ENCODE measurements at regions of chr5 and their contacts with region 1.

Region 1: DNA sequence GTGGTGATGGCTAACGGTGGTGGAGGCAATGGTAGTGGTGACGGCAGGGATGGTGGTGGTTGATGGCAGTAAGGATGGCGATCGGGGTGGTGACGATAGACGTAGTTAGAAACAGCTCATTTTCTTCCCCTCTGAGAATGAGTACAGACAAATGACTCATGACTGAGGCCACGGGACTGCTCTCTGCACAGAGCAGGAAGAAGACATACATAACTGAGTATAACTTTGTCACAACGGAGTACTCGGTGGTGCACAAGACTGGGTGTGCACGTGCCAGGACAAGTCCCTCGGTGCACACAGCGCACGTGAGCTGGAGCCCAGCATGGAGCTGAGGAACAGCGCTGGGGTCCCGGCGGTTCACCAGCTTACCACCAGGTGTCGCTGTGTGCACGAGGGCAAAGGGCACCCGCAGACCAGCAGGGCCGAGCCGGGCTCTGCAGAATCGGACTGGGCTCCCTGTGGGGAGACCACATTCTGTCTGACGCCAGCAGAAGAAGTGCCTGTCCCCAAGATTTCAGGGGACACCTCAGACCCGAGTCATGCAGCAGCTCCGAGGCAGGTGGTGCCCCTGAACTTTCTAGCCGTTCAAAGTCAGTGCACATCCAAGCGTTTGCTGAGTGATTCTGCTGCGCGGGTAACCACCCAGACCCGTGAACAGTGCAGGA is 188.6 kb downstream of the FSTL4 start:
- DNase-seq: peak; percentile 73
- H3K27ac ChIP-seq: peak overlapping the region; percentile 54
- CTCF ChIP-seq: peak; percentile 79; the same call in 1 of the 2 replicates

Region 2: DNA sequence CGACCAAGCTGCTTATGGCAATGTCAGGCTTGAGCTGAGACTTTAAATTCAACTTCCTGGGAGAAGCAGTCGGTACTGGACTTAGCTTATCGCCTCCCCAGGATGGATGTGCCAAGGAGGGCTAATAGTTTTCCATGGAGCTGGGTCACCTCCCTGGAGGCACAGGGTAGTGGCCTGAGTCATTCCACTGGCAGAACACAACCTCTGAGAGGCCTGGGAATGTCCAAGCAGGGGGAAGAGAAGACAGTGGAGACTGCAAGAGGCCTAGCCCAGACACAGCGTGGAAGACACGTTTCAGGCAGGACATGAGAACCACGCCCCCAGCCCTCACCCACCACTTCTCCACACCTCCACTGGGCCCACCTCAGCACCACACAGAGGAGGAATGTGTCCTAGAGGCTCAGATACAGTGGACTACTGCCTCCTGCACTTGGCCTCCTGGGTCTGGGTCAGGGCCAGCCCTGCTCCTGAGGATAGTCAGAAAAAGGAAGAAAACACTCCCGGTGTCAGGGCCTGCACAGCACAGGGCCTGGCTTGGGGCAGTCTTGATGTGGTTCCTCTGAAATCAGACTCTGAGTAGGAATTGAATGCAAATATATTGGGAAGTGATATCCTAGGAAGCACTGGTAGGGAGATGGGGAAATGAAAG is 16.8 kb after region 1 on chr5:
- CTCF ChIA-PET with region 1: interaction called, 10 read pairs
- POLR2A ChIA-PET with region 1: no interaction called
- DNase-seq: no peak
- H3K27ac ChIP-seq: peak overlapping the region; percentile 50
- CTCF ChIP-seq: no peak

Measured in RWPE1 (cell line).